ENCODE measurements at regions of chr5 and their contacts with region 1.

Region 1: DNA sequence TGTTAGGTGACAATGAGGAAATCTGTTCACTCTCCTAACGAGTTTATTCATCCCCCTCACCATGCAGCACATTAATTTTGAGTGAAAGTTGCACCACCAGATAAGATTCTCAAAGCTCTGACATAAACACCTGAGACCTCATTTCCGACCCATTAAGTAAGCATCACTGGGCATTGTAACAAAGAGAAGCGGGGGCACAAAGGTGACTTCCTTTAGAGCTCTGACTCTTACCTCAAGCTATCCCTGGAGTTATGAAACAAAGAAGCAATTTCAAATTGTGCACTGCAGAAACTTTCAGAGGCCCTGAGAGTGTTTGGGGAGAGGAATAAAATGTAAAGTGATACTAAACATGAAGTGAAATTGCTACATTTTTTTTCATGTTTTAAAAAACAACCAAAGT is 29.5 kb downstream of the C5orf15 start:
- DNase-seq: peak; percentile 32
- H3K4me3 Mint-ChIP-seq: no peak overlapping the region
- H3K27ac Mint-ChIP-seq: peak overlapping the region; percentile 70
- H3K4me1 Mint-ChIP-seq: peaks cover 15% of the 10 kb centered on the region
- H3K27me3 Mint-ChIP-seq: no peaks in the 10 kb centered on the region

Region 2: GRCh38 chr5:133875179-133875578 is 63.8 kb before region 1 on chr5:
- CTCF ChIA-PET with region 1: interaction called, 9 read pairs
- POLR2A ChIA-PET with region 1: no interaction called
- intact Hi-C with region 1: loop called (anchors 2 kb)
- DNase-seq: no peak
- H3K4me3 Mint-ChIP-seq: no peak overlapping the region
- H3K27ac Mint-ChIP-seq: peak overlapping the region; percentile 26
- H3K4me1 Mint-ChIP-seq: peaks cover 38% of the 10 kb centered on the region
- H3K27me3 Mint-ChIP-seq: peaks cover 2% of the 10 kb centered on the region

Region 3: DNA sequence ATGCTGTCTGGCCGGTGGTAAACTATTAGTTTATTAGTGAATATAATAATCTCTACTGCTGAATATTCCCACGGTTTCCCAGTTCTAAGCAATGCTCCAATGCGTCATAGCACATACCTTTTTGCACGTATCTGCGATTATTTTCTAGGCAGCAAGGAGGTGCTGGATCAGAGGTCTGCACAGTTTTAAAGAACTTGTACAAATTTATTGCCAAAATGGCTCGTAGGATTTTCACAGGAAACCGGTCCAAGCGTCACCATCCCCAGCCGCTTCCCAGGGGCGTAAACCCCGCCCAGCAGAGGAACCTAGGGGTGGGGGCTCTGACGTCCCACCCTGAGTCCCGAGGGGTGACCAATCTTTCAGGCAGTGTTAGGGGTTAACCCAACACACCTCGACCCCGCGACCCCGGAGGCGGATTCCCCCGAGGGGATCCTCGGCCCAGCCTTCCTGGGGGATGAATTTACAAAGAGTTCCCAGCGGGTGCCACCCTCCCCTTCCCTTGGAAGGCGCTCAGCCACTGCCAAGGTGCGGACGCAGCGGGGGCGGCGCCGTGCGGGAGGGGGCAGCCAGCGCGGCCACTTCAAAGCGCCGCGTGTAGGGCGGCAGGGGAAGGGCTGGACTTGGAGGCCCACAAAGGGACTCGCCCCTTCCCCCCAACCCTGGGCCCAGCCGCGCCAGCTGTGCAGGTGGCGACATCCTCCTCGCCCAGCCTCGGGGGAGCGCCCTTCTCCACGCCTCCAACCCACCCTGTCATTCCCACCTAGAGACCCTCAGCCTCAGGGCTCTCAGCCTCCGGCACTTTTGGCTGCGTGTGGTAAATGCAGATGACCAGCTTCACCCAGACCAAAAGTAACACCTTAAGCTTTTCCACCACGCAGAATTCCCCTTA is 132.0 kb after region 1 on chr5:
- CTCF ChIA-PET with region 1: no interaction called
- POLR2A ChIA-PET with region 1: no interaction called
- intact Hi-C with region 1: no loop called
- DNase-seq: peak; percentile 58
- H3K4me3 Mint-ChIP-seq: peak overlapping the region; percentile 77
- H3K27ac Mint-ChIP-seq: peak overlapping the region; percentile 92
- H3K4me1 Mint-ChIP-seq: peaks cover 63% of the 10 kb centered on the region
- H3K27me3 Mint-ChIP-seq: no peaks in the 10 kb centered on the region